ENCODE measurements at regions of chr5 and their contacts with region 1.

Region 1: GRCh38 chr5:102971697-102972293 is 148.1 kb downstream of the GIN1 start:
- DNase-seq: peak in 1 of 2 experiments; percentile 6
- H3K4me3 ChIP-seq: no peak overlapping the region
- H3K4me3 Mint-ChIP-seq: no peak overlapping the region
- H3K27ac Mint-ChIP-seq: no peak overlapping the region
- H3K4me1 ChIP-seq: no peaks in the 10 kb centered on the region
- H3K4me1 Mint-ChIP-seq: no peaks in the 10 kb centered on the region
- H3K27me3 ChIP-seq: no peaks in the 10 kb centered on the region
- H3K27me3 Mint-ChIP-seq: no peaks in the 10 kb centered on the region
- CTCF ChIP-seq: peak in 1 of 2 experiments; percentile 47

Region 2: DNA sequence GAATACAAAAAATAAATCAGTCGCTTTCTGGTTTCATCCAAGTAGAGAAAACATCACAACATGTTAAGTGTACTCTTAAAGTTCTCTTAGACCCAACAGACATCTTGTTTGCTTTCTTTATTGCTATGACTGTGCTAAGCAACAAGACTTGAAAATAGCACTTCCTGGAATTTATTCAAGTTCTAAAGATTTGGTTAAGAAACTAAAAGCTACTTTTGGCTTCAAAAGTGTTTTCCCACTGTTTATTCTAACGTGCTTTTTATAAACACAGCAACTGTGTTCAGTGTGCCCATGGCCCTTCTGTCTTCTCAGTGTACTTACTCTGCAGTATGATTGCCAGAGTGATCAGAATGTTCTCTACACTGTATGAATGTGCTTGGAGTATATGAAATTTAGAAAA is 38.4 kb after region 1 on chr5:
- CTCF ChIA-PET with region 1: no interaction called
- POLR2A ChIA-PET with region 1: no interaction called
- intact Hi-C with region 1: no loop called
- DNase-seq: no peak
- H3K4me3 ChIP-seq: no peak overlapping the region
- H3K4me3 Mint-ChIP-seq: no peak overlapping the region
- H3K27ac Mint-ChIP-seq: no peak overlapping the region
- H3K4me1 ChIP-seq: no peaks in the 10 kb centered on the region
- H3K4me1 Mint-ChIP-seq: no peaks in the 10 kb centered on the region
- H3K27me3 ChIP-seq: no peaks in the 10 kb centered on the region
- H3K27me3 Mint-ChIP-seq: no peaks in the 10 kb centered on the region
- CTCF ChIP-seq: no peak

Region 3: GRCh38 chr5:103021314-103021713 is 49.5 kb after region 1 on chr5:
- CTCF ChIA-PET with region 1: no interaction called
- POLR2A ChIA-PET with region 1: no interaction called
- intact Hi-C with region 1: no loop called
- DNase-seq: no peak
- H3K4me3 ChIP-seq: no peak overlapping the region
- H3K4me3 Mint-ChIP-seq: no peak overlapping the region
- H3K27ac Mint-ChIP-seq: no peak overlapping the region
- H3K4me1 ChIP-seq: no peaks in the 10 kb centered on the region
- H3K4me1 Mint-ChIP-seq: no peaks in the 10 kb centered on the region
- H3K27me3 ChIP-seq: no peaks in the 10 kb centered on the region
- H3K27me3 Mint-ChIP-seq: no peaks in the 10 kb centered on the region
- CTCF ChIP-seq: no peak

Region 4: DNA sequence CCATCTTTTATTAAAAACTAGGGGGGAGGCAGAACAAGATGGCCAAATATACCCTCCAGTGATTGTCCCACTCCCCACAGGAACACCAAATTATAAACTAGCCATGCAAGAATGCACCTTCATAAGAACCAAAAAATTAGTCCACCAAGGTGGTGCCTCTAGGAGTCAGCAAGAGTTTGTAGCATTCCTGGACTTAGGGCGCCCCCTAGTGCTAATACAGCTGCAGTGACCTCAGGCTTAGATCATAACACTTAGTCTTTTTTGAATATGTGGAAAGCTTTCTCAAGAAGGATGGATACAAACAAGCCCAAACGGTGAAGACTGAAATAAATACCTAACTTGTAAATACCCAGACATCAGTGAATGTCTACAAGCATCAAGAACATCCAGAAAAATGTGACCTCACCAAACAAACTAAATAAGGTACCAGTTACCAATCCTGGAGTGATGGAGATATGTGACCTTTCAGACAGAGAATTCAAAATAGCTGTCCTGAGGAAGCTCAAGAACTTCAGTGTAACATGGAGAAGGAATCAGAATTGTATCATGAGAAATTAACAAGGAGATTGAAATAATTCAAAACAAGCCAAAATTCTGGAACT is 167.6 kb after region 1 on chr5:
- CTCF ChIA-PET with region 1: no interaction called
- POLR2A ChIA-PET with region 1: no interaction called
- intact Hi-C with region 1: loop called (anchors 1 kb)
- DNase-seq: peak; percentile 78 to 84
- H3K4me3 ChIP-seq: no peak overlapping the region
- H3K4me3 Mint-ChIP-seq: no peak overlapping the region
- H3K27ac Mint-ChIP-seq: no peak overlapping the region
- H3K4me1 ChIP-seq: peaks cover 22% of the 10 kb centered on the region
- H3K4me1 Mint-ChIP-seq: no peaks in the 10 kb centered on the region
- H3K27me3 ChIP-seq: no peaks in the 10 kb centered on the region
- H3K27me3 Mint-ChIP-seq: no peaks in the 10 kb centered on the region
- CTCF ChIP-seq: peak; percentile 92 to 93

Measured in Caco-2 (cell line).